ENCODE measurements at regions of chr7 and their contacts with region 1.

Region 1: DNA sequence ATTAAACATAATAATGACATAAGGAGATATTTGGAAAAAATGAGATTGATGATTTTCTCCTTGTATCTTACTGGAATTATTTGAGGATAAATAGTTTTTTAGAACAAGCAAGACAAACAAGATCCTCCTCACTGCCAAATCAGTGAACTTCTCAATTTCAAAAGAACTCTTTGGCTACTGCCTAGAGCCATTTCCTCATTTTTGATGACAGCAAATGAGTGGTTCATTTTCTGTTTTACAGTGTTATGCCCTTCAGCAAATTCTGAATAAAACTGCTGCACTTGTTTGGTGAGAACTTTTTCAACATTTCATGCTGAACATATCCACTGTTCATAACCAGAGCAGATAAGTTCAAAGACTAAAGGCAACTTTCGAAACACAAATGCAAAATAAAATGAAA is 42.5 kb upstream of the AHR start:
- DNase-seq: no peak
- H3K4me3 Mint-ChIP-seq: no peak overlapping the region
- H3K27ac Mint-ChIP-seq: no peak overlapping the region
- H3K4me1 Mint-ChIP-seq: peaks cover 15% of the 10 kb centered on the region
- H3K27me3 Mint-ChIP-seq: no peaks in the 10 kb centered on the region

Region 2: DNA sequence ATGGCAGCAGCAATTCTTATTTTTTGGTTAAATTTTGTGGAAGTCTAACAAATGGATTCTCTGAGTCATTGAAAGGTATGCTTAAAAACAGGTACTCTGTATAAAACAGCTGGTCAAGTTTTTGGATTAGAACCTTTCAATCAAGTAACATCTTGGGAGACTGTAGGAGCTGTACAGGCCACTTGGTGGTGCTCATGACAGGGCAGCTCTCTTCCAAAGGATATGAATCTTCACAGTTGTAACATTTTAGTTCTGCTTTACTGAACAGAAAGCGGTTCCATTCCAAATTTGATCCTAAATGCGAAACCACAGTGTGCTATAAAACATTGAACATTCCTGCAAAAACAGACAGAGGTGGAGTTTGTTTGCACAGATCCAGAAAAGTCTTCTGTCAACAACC is 329.6 kb before region 1 on chr7:
- intact Hi-C with region 1: loop called (anchors 1 kb)
- DNase-seq: no peak
- H3K4me3 Mint-ChIP-seq: no peak overlapping the region
- H3K27ac Mint-ChIP-seq: peak overlapping the region; percentile 43
- H3K4me1 Mint-ChIP-seq: peaks cover 62% of the 10 kb centered on the region
- H3K27me3 Mint-ChIP-seq: no peaks in the 10 kb centered on the region

Region 3: GRCh38 chr7:17021180-17021579 is 234.7 kb before region 1 on chr7:
- intact Hi-C with region 1: loop called (anchors 5 kb)
- DNase-seq: no peak
- H3K4me3 Mint-ChIP-seq: no peak overlapping the region
- H3K27ac Mint-ChIP-seq: no peak overlapping the region
- H3K4me1 Mint-ChIP-seq: peaks cover 21% of the 10 kb centered on the region
- H3K27me3 Mint-ChIP-seq: peaks cover 3% of the 10 kb centered on the region

Region 4: DNA sequence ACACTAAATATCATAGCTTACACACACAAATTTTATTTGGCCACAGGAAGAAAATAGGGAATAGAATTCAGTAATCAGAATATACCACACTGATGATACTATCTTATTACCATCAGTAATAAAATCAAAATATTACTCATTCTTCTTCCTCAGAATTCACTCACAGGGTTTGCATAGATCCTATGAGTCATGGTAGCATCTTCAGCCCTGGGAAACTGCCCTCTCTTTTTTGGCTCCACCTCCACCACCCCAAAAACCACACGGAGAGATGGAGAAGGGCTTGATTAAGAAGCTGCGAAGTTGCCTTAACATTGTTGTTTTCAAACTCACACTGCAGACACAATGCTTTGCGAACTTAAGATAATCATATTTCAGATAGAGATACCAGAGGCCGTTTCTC is 111.6 kb before region 1 on chr7:
- intact Hi-C with region 1: loop called (anchors 1 kb)
- DNase-seq: peak; percentile 70
- H3K4me3 Mint-ChIP-seq: peak overlapping the region; percentile 16
- H3K27ac Mint-ChIP-seq: peak overlapping the region; percentile 71
- H3K4me1 Mint-ChIP-seq: peaks cover 63% of the 10 kb centered on the region
- H3K27me3 Mint-ChIP-seq: no peaks in the 10 kb centered on the region

Region 5: GRCh38 chr7:17166824-17167379 is 89.0 kb before region 1 on chr7:
- intact Hi-C with region 1: loop called (anchors 1 kb)
- DNase-seq: no peak
- H3K4me3 Mint-ChIP-seq: no peak overlapping the region
- H3K27ac Mint-ChIP-seq: peak overlapping the region; percentile 66
- H3K4me1 Mint-ChIP-seq: peaks cover 35% of the 10 kb centered on the region
- H3K27me3 Mint-ChIP-seq: no peaks in the 10 kb centered on the region

Region 6: DNA sequence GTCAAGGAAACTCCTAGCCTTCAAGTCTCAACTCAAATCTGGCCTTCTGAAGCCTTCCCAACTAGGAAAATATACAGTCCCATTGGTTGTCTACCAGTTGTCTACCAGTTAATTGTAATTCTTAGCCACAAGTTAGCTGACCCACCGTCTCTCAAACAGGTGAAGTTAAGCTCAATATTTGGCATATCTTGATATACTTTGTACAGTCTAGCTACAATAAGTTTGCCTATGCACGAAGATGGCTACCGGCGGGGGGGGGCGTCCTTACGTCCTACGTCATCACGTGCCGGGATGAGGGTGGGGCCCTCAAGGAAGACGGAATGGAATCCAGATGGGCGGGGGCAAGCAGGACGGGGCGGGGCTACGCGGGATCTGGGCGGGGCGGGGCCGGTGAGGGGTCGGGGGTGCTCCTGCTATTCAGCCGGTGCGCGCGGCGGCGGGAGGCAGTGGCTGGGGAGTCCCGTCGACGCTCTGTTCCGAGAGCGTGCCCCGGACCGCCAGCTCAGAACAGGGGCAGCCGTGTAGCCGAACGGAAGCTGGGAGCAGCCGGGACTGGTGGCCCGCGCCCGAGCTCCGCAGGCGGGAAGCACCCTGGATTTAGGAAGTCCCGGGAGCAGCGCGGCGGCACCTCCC is 42.4 kb after region 1 on chr7 and contains the start of gene AHR:
- intact Hi-C with region 1: loop called (anchors 1 kb)
- DNase-seq: peak; percentile 67
- H3K4me3 Mint-ChIP-seq: peak within 1 kb of the TSS; percentile 96
- H3K27ac Mint-ChIP-seq: peak within 1 kb of the TSS; percentile 95
- H3K4me1 Mint-ChIP-seq: peaks cover 23% of the 10 kb centered on the region
- H3K27me3 Mint-ChIP-seq: peaks cover 2% of the 10 kb centered on the region
- total RNA-seq, gene AHR: 34.3 and 37.2 TPM in 2 replicates

Measured in activated T-helper 2 cell treated with anti-CD3 and anti-CD28 coated beads, Interferon-gamma antibody, Interleukin-2, Interleukin-4, amounts not matched to agents 10 μg/mL and 5 μg/mL and 100 μg/mL, durations not matched to agents 14 hours and 24 hours and 36 hours (primary cell).